AG04450 (cell line): ENCODE measurements at regions of chr16 and their contacts with region 1.

Region 1: DNA sequence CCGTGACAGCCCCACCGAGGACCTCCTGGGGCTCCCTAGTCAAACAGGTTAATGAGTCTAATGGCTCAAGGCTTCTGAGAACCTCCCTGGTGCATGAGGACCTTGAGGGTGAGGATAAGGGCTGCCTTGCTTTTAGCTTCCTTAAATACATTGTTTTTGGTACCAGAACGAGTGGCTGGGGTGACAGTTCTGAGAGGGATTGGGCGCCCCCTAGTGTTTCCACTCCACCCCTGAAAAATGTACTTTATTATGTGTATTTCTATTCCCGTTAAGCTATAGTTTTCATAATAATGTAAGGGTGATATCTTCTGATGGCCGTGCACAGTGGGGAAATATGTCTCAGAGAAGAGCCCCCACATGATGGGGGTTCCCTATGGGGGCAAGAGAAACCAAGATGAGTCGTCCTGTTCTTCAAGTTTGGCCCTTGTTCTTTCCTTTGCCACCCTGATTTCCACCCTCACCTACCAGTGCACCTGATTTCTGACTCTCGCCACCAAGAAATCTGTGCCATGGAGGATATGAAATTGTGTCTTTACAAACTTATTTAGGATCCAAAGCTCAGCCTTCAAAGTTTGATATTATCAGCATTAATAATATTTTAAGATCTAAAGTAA is 14.5 kb upstream of the VWA3A start:
- DNase-seq: peak; percentile 26
- H3K4me3 ChIP-seq: no peak overlapping the region
- H3K27ac ChIP-seq: no peak overlapping the region
- H3K27me3 ChIP-seq: no peaks in the 10 kb centered on the region
- CTCF ChIP-seq: peak; percentile 87

Region 2: DNA sequence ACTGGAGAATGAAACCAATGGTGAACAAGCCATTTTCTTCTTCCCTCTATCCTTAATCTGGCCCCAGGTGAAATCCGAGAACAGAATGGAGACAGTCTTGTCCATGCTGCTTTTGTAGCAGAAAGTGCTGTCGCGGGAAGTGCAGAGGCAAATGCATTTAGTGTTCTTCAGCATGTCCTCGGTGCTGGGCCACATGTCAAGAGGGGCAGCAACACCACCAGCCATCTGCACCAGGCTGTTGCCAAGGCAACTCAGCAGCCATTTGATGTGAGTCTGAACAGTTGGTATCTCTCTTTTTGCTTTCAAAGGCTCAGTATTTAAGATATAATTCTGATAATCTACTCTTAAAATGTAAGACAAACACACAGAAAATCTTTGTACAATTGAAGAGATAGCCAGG is 106.0 kb before region 1 on chr16:
- CTCF ChIA-PET with region 1: interaction called, 13 read pairs
- POLR2A ChIA-PET with region 1: no interaction called
- DNase-seq: no peak
- H3K4me3 ChIP-seq: no peak overlapping the region
- H3K27ac ChIP-seq: no peak overlapping the region
- H3K27me3 ChIP-seq: no peaks in the 10 kb centered on the region
- CTCF ChIP-seq: no peak

Region 3: DNA sequence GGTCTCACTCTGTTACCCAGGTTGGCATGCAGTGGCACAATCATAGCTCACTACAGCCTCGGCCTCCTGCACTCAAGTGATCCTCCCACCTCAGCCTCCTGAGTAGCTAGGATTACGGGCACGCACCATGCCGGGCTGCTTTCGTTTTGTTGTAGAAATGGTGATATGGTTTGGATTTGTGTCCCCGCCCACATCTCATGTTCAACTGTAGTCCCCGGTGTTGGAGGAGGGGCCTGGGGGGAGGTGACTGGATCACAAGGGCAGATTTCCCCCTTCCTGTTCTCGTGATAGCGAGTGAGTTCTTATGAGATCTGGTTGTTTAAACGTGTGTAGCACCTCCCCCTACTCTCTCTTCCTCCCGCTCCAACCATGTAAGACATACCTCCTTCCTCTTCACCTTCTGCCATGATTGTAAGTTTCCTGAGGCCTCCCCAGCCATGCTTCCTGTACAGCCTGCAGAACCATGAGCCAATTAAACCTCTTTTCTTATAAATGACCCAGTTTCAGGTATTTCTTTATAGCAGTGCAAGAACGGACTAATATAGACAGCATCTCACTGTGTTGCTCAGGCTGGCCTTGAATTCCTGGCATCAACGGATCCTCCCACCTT is 82.8 kb before region 1 on chr16:
- CTCF ChIA-PET with region 1: interaction called, 365 read pairs
- POLR2A ChIA-PET with region 1: interaction called, 7 read pairs
- DNase-seq: no peak
- H3K4me3 ChIP-seq: no peak overlapping the region
- H3K27ac ChIP-seq: no peak overlapping the region
- H3K27me3 ChIP-seq: no peaks in the 10 kb centered on the region
- CTCF ChIP-seq: no peak

Region 4: DNA sequence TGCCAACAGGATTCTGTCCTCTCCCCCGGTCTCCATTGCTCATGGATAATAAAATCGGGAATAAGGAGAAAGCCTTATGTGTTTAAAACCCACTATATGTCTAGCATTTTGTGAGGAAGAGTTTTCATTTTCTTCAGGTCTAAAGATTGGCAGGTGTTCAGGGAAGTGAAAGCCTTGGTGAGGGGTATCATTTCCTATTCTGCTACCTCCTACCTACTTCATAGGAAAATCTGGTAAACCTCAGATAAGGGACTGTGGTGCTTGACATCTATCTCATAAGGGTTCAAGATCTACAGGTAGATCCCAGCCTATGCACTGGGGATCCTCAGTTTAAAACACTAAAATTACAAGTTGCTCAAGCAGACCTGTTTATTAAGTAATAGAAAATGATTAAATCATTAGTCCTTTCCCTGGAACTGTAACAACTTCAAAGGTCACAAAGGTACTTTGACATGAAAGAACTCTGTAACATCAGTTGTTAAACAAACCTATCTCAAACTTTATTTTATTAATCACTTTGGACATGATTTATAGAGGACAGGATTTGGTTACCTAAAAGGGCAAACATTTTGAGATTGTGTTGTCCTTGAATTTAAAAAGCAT is 63.4 kb before region 1 on chr16:
- CTCF ChIA-PET with region 1: interaction called, 208 read pairs
- POLR2A ChIA-PET with region 1: interaction called, 8 read pairs
- DNase-seq: no peak
- H3K4me3 ChIP-seq: no peak overlapping the region
- H3K27ac ChIP-seq: no peak overlapping the region
- H3K27me3 ChIP-seq: no peaks in the 10 kb centered on the region
- CTCF ChIP-seq: no peak

Region 5: DNA sequence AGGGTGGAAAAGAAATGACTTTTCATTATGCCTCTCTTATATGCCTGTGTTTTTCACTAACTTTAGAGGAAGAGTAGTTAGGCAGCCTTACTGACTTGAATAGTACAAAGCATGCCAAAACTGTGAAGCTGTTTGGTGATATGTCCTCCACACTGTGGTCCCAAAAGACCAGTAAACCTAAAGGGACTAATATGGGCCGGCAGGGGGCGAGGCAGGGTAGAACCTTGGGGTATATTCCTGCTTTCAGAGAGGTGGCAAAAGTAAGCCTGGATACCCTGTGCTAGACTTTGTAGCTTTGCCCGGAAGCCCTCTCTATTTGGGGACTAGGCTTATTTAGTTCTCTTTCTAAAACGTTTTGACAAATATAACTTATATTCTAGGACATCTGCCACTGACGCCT is 21.9 kb before region 1 on chr16:
- CTCF ChIA-PET with region 1: interaction called, 46 read pairs
- POLR2A ChIA-PET with region 1: no interaction called
- DNase-seq: no peak
- H3K4me3 ChIP-seq: no peak overlapping the region
- H3K27ac ChIP-seq: no peak overlapping the region
- H3K27me3 ChIP-seq: no peaks in the 10 kb centered on the region
- CTCF ChIP-seq: no peak

Region 6: GRCh38 chr16:22098405-22099255 is 20.8 kb after region 1 on chr16:
- CTCF ChIA-PET with region 1: interaction called, 96 read pairs
- POLR2A ChIA-PET with region 1: no interaction called
- DNase-seq: no peak
- H3K4me3 ChIP-seq: peak overlapping the region; percentile 8; the same call in 1 of the 2 replicates
- H3K27ac ChIP-seq: no peak overlapping the region
- H3K27me3 ChIP-seq: peaks cover 5% of the 10 kb centered on the region
- CTCF ChIP-seq: peak; percentile 66